ENCODE measurements at regions of chr2 and their contacts with region 1.

Region 1: DNA sequence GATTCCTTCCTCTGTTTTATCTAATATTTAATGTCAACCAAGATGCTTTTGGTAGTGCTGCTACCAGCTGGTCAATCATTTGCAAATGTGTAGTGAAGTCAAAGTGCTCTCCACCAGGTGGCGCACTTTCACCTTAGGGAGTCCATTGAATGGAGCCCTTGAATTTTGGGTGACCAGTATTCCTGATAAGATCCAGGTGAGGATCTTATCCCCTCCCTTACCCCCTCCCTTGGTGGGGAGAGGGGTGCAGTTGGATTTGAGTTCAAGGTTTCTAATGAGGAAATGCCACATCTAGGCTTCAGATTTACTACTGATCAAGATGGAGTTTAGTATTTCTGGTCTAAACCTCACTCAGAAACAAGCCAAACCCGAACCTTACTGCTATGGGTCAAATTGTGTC is 12.0 kb upstream of the E2F6 start:
- DNase-seq: peak; percentile 33 to 92
- H3K4me3 ChIP-seq: no peak overlapping the region
- H3K27ac ChIP-seq: no peak overlapping the region
- H3K4me1 ChIP-seq: no peaks in the 10 kb centered on the region
- H3K27me3 ChIP-seq: peaks cover 12% of the 10 kb centered on the region
- CTCF ChIP-seq: peak; percentile 68 to 83 (median 82)

Region 2: DNA sequence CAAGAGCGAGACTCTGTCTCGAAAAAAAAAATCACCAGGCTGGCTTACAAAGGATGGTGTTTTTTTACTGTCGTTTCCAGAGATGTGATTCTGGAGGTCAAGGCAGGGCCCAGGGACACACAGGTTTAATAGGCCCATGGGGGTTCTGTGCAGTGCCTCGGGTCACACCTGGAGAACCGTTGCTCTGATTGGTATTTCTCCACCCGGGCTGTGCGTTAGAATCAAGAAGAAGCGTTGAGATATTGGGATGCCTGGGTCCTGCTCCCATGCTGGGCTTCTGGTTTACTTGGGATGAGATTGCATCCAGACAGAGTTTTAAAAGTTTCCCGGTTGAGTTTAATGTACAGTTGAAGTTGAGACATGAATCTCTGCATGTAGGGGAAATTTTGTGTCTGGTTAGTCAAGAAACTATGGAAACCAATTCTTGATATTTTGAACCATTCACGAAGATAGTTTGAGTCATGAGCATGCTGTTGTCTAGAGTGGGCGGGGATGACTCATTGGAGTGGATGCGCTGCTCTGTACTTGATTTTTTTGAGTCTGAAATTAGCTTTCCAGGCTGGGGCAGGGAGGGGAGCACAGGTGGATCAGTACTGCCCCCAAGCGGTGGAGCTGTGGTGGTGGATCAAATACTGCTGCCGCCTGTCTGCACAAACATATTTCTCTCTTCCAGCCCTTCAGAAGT is 106.0 kb after region 1 on chr2:
- intact Hi-C with region 1: loop called (anchors 5 kb)
- DNase-seq: peak in 1 of 2 donors; percentile 74
- H3K4me3 ChIP-seq: no peak overlapping the region
- H3K27ac ChIP-seq: no peak overlapping the region
- H3K4me1 ChIP-seq: no peaks in the 10 kb centered on the region
- H3K27me3 ChIP-seq: no peaks in the 10 kb centered on the region
- CTCF ChIP-seq: peak; percentile 19 to 40 (median 35)

Region 3: DNA sequence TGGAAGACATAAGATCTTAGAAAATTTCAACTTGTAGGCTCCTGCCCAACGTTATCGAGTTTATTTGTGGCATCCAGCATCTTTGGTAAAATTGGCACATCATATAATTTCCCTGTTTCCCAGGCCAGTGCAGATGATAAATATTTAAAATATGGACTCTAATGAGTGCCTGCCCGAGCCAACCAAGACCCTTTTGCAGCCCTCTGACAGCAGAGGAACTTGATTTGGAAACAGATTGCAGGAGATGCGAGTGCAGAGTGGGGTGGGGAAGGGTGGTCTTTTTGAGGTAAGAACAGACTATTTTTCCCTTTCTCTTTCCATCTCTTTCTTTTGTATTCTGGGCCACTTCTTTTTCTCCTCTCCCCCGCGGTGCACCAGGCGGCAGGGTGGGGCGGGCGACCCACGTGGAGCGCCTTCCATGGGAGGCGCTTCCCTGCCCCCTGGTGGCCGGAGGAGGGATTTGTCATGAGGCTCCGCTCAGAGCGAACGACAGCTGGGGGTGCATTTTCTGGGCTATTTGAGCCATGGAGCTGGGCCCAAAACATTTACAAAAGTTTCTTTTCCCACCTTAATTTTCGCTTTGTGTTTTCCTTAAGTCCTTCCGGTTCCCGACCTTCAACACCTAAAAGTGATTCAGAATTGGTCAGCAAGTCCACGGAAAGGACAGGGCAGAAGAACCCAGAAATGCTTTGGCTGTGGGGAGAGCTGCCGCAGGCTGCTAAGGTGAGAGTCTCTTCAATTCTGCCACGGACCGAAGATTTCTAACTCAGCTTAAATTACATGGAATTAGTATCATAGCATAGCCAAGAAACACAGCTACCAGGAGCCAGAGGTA is 301.1 kb after region 1 on chr2:
- intact Hi-C with region 1: loop called (anchors 1 kb)
- DNase-seq: peak in 1 of 2 donors; percentile 79
- H3K4me3 ChIP-seq: no peak overlapping the region
- H3K27ac ChIP-seq: no peak overlapping the region
- H3K4me1 ChIP-seq: peaks cover 3 to 4% of the 10 kb centered on the region in 2 donors
- H3K27me3 ChIP-seq: no peaks in the 10 kb centered on the region
- CTCF ChIP-seq: peak; percentile 94 to 99 (median 94)

Measured in ascending aorta (tissue), 2 donors.